ENCODE measurements at regions of chr9 and their contacts with region 1.

Region 1: DNA sequence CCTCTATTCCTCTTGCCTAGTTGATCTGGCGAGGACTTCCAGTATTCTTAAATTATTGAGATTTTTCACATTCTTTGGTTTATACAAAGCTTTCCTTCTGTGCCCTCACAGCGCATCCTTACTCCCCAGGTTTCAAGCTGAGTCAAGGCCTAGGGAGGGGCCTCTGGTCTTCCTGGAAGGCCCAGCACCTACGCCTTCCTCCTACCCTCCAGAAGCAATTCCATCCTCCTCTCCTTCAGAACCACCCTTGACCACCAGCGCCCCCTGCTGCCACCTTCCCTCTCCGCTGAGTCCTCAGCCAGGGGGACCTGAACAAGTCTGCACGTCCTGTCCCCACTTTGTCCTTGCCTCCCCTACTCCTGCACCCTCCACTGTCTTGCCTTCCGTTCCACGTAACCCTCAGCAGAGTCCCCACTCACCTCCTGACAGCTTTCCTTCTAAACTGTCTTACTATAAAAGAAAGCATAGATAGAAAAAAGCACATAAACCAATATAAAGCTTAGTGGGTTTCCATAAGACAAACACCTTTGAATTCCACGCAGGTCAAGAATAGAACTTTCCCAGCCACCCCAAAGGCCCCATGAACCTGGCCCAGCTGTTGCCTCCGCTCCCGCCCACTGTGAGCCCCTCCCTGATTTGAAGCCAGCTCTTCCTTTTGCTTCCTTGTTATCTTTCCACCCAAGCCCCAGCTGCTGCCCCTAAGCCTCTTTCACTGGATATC is 63.0 kb upstream of the CTSL start:
- ATAC-seq: peak in 7 of 8 experiments; percentile 50 to 93 (median 83)
- H3K4me3 ChIP-seq: no peak overlapping the region
- H3K27ac ChIP-seq: no peak overlapping the region
- H3K4me1 ChIP-seq: no peaks in the 10 kb centered on the region

Region 2: GRCh38 chr9:86434039-86434726 is 1228.8 kb before region 1 on chr9:
- in situ Hi-C with region 1: loop called in 1 of 9 experiments (anchors 25 kb)
- ATAC-seq: peak in 4 of 8 experiments; percentile 39 to 94 (median 84)
- H3K4me3 ChIP-seq: no peak overlapping the region
- H3K27ac ChIP-seq: no peak overlapping the region
- H3K4me1 ChIP-seq: no peaks in the 10 kb centered on the region

Region 3: GRCh38 chr9:87336914-87337333 is 326.0 kb before region 1 on chr9:
- in situ Hi-C with region 1: loop called in 7 of 9 experiments (anchors 10 to 25 kb)
- ATAC-seq: peak; percentile 54 to 78 (median 66)
- H3K4me3 ChIP-seq: peak overlapping the region; percentile 21 to 38 (median 37)
- H3K27ac ChIP-seq: no peak overlapping the region
- H3K4me1 ChIP-seq: peaks cover 14 to 17% of the 10 kb centered on the region in 2 donors

Region 4: DNA sequence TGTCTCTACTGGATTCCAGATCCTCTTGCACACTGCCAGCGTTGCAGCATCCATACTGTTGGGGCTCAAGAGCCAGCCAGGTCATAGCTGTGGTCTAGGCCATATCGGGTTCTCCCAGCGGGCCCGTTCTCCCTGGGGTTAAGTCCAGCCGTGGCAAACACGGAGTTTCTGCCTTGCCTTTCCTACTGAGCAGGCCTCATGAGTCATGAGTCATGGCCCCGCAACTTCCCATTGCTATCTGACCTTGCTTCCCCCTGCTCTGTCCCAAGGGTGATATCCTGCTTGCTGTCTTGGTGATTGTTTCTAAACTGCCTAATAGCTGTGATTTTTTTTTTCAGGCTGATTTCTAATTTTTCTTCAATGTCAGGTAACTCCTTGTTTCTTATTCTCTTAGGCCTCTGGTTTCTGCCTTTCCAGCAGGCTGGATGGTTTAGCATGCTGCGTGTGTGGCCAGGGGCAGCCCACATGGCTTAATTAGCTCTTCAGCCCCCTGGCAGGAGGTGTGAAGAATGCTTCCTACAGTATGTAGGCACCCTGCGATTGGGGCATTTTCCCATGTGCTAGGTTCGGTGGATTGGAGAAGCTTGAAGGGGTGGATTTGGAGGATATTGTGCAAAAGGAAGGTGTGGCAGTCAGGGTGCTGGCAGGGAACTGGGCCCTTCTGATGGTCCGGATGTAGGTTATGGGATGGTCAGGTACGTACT is 146.6 kb before region 1 on chr9:
- in situ Hi-C with region 1: loop called in 1 of 9 experiments (anchors 25 kb)
- ATAC-seq: peak in 7 of 8 experiments; percentile 7 to 95 (median 87)
- H3K4me3 ChIP-seq: no peak overlapping the region
- H3K27ac ChIP-seq: peak overlapping the region in 1 of 2 donors; percentile 19
- H3K4me1 ChIP-seq: peaks cover 12 to 30% of the 10 kb centered on the region in 2 donors